Heart left ventricle (tissue), 16 donors: ENCODE measurements at regions of chr1 and their contacts with region 1.

Region 1: DNA sequence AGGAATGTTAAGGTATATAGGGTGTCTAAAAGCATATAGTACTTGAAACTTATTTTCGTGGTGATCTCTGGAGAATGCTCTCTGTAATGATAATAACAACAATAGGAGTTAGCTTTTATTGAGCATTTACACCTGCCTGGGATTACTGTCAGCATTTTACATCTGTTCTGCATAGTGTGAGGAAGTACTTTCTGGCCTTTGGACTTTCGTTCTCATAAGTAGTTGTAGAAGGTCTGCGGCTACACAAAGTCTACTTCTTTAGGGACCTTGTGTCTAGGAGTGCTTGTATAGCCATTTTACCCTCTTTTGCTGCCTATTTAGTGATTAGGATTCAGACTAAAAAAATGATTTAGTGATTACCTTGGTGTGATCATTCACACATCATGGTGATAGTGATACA is 103.6 kb upstream of the GPR52 start:
- DNase-seq: no peak
- ATAC-seq: no peak
- H3K4me3 ChIP-seq: no peak overlapping the region
- H3K27ac ChIP-seq: no peak overlapping the region
- H3K4me1 ChIP-seq: no peaks in the 10 kb centered on the region
- H3K27me3 ChIP-seq: no peaks in the 10 kb centered on the region
- CTCF ChIP-seq: no peak
- POLR2A ChIP-seq: no peak

Region 2: DNA sequence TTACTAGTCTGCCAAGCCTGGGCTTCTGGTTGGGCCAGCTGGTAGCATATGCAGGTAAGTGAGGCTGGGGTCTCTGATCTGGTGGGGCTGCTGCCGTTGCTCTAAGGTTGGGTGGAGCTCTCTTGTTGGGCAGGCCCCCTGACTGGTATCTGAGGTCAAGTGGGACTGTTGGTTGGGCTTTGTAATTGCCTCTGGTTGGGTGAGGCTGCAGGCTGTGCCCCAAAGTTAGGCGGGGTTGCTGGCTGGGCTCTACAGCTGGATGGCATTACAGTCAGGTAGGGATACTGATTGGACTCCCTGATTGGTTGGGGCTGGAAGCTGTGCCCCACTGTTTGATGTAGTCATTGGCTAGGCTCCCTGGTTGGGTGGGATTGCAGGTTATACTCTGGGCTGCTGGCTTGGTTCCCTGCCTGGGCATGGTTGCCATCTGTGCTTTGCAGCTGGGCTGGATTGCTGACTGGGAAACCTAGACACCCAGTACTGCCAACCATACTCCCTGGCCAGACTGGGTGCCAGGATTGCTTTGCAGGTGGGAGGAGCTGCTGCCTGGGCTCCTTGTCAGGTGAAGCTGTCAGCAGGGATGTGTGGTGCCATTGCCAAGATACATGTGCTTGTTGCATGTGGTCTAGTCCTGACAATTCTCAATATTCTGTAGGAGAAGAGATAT is 54.4 kb before region 1 on chr1:
- intact Hi-C with region 1: loop called in 1 of 10 experiments (anchors 10 kb)
- DNase-seq: peak; percentile 10 to 79 (median 34)
- ATAC-seq: peak; percentile 66 to 88 (median 81)
- H3K4me3 ChIP-seq: no peak overlapping the region
- H3K27ac ChIP-seq: no peak overlapping the region
- H3K4me1 ChIP-seq: peaks cover 0 to 4% (median 0%) of the 10 kb centered on the region in 12 donors
- H3K27me3 ChIP-seq: no peaks in the 10 kb centered on the region
- CTCF ChIP-seq: no peak
- POLR2A ChIP-seq: no peak

Region 3: DNA sequence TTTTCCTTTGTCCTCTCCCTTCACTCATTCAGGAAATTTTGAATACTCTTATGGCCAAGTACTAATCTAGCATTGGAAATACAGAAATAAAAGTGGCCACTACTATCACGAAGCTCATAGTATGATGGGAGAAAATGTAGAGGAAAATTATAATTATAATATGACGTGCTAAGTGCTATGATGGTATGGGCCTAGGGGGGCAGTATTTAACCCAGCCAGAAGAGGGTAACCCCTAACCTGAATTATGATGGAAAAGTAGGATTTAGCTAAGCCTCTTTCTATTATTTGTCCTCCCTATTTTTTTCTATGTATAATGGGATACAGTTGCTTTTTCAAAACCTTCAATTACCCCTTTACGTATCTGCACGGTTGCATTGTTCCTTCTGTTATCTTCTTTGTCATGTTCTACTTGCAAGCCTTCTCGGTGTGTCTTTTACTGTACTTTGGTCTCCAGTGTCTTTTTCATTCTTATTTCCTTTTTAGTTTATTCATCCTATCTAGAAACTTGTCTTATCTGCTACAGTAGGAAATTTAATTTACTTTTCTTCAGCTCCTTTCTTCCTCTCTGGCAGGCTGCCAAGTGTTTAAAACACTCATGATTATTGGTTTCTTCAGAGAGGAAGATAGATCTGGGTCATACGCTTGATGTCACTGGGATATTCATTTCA is 14.8 kb after region 1 on chr1:
- intact Hi-C with region 1: no loop called
- DNase-seq: no peak
- ATAC-seq: no peak
- H3K4me3 ChIP-seq: no peak overlapping the region
- H3K27ac ChIP-seq: peak overlapping the region in 4 of 12 donors; percentile 7 to 33 (median 15)
- H3K4me1 ChIP-seq: peaks cover 0 to 25% (median 4%) of the 10 kb centered on the region in 12 donors
- H3K27me3 ChIP-seq: no peaks in the 10 kb centered on the region
- CTCF ChIP-seq: no peak
- POLR2A ChIP-seq: no peak

Region 4: DNA sequence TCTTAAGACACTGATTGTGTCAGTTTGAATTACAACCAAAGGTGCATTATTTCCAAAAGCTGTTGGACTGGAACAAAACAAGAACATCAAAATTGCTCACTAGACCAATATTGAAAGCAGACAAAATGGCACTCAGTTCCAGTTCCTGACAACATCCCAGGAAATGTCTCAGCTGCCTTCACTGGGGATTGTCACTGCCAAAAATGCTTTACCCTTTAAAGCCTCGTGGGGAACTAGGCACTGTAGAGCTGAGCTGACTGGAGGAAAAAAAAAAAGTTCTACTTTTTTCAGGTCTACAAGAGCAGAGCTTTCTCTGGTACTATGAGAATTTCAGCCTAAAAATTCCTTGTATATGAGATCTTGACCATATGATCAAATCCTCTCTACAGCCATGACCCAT is 125.5 kb after region 1 on chr1:
- intact Hi-C with region 1: no loop called
- DNase-seq: no peak
- ATAC-seq: peak; percentile 52 to 73 (median 70)
- H3K4me3 ChIP-seq: no peak overlapping the region
- H3K27ac ChIP-seq: no peak overlapping the region
- H3K4me1 ChIP-seq: peaks cover 0 to 17% (median 0%) of the 10 kb centered on the region in 12 donors
- H3K27me3 ChIP-seq: no peaks in the 10 kb centered on the region
- CTCF ChIP-seq: no peak
- POLR2A ChIP-seq: no peak